ENCODE measurements at regions of chr16 and their contacts with region 1.

Region 1: GRCh38 chr16:117379-118365 is 20.8 kb downstream of the NPRL3 start:
- DNase-seq: peak; percentile 39
- H3K4me3 Mint-ChIP-seq: no peak overlapping the region
- H3K27ac Mint-ChIP-seq: no peak overlapping the region
- H3K4me1 Mint-ChIP-seq: peaks cover 13% of the 10 kb centered on the region
- H3K27me3 Mint-ChIP-seq: no peaks in the 10 kb centered on the region

Region 2: DNA sequence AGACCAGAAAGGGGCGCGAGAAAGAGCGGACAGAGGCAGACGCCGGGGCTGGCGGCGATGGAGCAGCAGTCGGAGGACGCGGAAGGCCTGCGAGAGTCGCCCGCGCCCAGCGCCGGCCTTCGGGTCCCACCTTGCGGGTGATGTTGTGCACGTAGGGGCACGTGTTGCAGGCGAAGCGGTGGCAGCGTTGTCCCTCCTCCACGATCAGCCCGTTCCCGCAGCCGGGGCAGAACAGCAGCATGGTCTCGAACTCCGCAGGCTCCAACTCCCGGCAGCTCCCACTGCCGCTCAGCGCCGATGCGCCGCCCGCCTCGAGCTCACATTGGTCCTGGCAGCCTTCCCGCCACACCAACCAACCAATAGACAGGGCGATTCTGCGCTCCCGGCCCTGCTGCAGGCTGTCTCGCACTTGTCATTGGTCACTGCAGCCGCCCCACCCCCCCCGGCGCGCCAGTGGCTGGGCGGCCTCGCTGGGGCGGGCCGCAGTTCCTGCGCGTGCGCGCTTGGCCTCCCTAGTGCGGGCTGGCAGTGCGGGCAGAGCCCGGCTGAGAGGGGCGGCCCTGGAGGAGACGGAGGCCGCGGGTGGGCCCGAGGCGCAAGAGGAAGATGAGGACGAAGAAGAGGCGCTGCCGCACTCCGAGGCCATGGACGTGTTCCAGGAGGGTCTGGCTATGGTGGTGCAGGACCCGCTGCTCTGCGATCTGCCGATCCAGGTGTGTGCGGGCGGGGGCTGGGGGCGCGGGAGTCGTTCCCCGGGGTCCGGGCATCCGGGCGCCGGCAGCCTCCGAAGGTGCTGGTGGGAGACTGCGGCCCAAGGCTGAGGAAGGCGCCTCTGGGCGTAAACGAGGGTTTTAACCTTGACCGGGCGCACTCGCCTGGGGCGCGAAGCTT is 64.1 kb before region 1 on chr16 and contains the starts of genes POLR3K and SNRNP25:
- intact Hi-C with region 1: no loop called
- DNase-seq: peak; percentile 96
- H3K4me3 Mint-ChIP-seq: peak within 1 kb of the TSS; percentile 97
- H3K27ac Mint-ChIP-seq: peak within 1 kb of the TSS; percentile 85
- H3K4me1 Mint-ChIP-seq: peaks cover 20% of the 10 kb centered on the region
- H3K27me3 Mint-ChIP-seq: no peaks in the 10 kb centered on the region
- total RNA-seq, gene POLR3K: 64.8 and 67.3 TPM in 2 replicates
- total RNA-seq, gene SNRNP25: 77.5 and 83.1 TPM in 2 replicates

Region 3: DNA sequence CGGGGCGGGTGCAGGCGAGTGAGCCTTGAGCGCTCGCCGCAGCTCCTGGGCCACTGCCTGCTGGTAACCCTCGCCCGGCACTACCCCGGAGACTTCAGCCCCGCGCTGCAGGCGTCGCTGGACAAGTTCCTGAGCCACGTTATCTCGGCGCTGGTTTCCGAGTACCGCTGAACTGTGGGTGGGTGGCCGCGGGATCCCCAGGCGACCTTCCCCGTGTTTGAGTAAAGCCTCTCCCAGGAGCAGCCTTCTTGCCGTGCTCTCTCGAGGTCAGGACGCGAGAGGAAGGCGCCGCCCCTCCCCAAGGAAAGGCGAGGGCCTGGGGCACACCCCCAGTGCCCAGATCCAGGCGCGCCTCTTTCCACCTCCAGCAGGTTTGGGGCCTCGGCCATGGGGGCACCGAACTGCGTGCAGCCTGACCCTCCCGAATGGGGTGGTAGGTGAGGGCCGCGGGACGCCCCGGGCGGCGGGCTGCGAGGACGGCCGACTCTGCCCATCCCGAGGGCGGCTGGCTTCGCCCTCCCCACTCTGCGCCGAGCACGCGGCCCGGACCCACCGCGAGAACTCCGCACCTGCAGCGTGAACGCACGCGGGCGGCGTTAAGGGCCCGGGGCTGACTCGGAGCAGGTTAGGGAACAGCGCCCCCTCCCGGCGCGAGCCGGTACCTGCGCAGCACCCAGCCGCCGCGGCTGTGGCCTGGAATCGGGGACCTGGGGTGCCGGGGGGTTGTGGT is 63.4 kb after region 1 on chr16:
- intact Hi-C with region 1: loop called (anchors 1 kb)
- DNase-seq: peak; percentile 81
- H3K4me3 Mint-ChIP-seq: peak overlapping the region; percentile 33
- H3K27ac Mint-ChIP-seq: no peak overlapping the region
- H3K4me1 Mint-ChIP-seq: no peaks in the 10 kb centered on the region
- H3K27me3 Mint-ChIP-seq: peaks cover 27% of the 10 kb centered on the region

Region 4: GRCh38 chr16:361872-362701 is 244.4 kb after region 1 on chr16:
- intact Hi-C with region 1: loop called (anchors 5 kb)
- DNase-seq: peak; percentile 64
- H3K4me3 Mint-ChIP-seq: no peak overlapping the region
- H3K27ac Mint-ChIP-seq: no peak overlapping the region
- H3K4me1 Mint-ChIP-seq: peaks cover 4% of the 10 kb centered on the region
- H3K27me3 Mint-ChIP-seq: no peaks in the 10 kb centered on the region

Measured in activated T-helper 2 cell treated with anti-CD3 and anti-CD28 coated beads, Interferon-gamma antibody, Interleukin-2, Interleukin-4, amounts not matched to agents 10 μg/mL and 5 μg/mL and 100 μg/mL, durations not matched to agents 14 hours and 24 hours and 36 hours (primary cell).